ENCODE measurements at regions of chr17 and their contacts with region 1.

Region 1: DNA sequence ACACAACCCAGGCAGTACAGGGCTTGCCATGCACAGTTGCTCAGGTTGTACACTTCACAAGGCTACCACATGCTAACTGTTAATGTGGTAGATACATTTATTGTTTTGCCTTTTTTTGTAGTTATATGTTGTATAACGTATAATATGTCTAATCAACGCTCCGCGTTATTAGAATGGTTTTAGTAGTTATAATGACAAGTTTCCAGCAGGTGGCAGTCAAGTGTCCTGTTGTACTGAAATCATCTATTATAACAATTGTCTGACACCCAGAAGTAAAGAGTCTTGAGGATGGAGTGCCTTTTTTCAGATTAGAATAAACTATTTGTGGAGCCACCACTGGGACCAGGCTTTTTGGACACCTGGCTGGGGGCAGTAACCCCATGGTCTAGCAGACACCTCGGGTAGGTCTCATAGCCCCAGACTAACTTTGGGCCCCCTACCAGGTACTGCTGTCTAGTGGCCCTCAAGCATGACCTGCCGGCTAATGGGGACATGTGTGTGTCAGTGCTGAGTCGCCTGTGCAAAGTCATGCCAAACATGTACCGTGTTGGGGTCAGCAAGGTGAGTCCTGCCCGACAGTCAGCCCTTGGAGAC is 32.8 kb downstream of the MYO15A start:
- DNase-seq: peak; percentile 64 to 65
- ATAC-seq: peak; percentile 43 to 65; a peak in 4 of 6 replicates
- H3K4me3 ChIP-seq: no peak overlapping the region
- H3K27ac ChIP-seq: no peak overlapping the region
- H3K4me1 ChIP-seq: no peaks in the 10 kb centered on the region
- CTCF ChIP-seq: peak; percentile 79
- EP300 ChIP-seq: no peak
- POLR2A ChIP-seq: no peak
- RAD21 ChIP-seq: peak; percentile 48 to 63; a peak in 3 of 5 replicates

Region 2: DNA sequence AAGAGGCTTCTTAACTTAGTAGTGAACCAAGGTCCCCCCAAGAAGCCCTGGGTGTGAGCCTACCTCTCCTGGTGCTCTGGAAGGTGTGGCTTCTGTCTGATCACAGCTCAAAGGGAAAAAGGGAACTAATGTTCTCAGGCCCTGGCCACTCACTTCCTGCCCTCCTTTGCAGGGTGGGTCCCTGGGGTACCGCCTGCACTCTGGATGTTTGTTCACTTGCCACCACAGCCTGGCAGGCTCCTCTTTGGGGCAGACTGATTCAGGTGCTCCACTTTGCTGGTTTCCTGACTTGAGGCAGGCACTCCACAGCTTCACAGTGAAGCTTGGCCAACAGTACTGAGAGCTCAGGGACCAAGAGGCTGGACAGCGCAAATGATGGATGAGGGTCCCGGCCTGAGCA is 38.7 kb before region 1 on chr17:
- CTCF ChIA-PET with region 1: no interaction called
- POLR2A ChIA-PET with region 1: no interaction called
- DNase-seq: no peak
- ATAC-seq: no peak
- H3K4me3 ChIP-seq: no peak overlapping the region
- H3K27ac ChIP-seq: no peak overlapping the region
- H3K4me1 ChIP-seq: no peaks in the 10 kb centered on the region
- CTCF ChIP-seq: no peak
- EP300 ChIP-seq: no peak
- POLR2A ChIP-seq: no peak
- RAD21 ChIP-seq: no peak

Region 3: GRCh38 chr17:18129041-18129502 is 12.2 kb before region 1 on chr17:
- CTCF ChIA-PET with region 1: interaction called, 49 read pairs
- POLR2A ChIA-PET with region 1: no interaction called
- DNase-seq: peak in 1 of 2 experiments; percentile 72
- ATAC-seq: peak; percentile 15 to 72; a peak in 3 of 6 replicates
- H3K4me3 ChIP-seq: no peak overlapping the region
- H3K27ac ChIP-seq: no peak overlapping the region
- H3K4me1 ChIP-seq: no peaks in the 10 kb centered on the region
- CTCF ChIP-seq: no peak
- EP300 ChIP-seq: no peak
- POLR2A ChIP-seq: no peak
- RAD21 ChIP-seq: no peak

Region 4: GRCh38 chr17:18166894-18167293 is 25.6 kb after region 1 on chr17:
- CTCF ChIA-PET with region 1: interaction called, 20 read pairs
- POLR2A ChIA-PET with region 1: no interaction called
- DNase-seq: peak in 1 of 2 experiments; percentile 60
- ATAC-seq: peak; percentile 19 to 67; a peak in 3 of 6 replicates
- H3K4me3 ChIP-seq: no peak overlapping the region
- H3K27ac ChIP-seq: no peak overlapping the region
- H3K4me1 ChIP-seq: no peaks in the 10 kb centered on the region
- CTCF ChIP-seq: no peak; the same call in 2 of the 3 replicates
- EP300 ChIP-seq: no peak
- POLR2A ChIP-seq: no peak
- RAD21 ChIP-seq: peak in 1 of 2 experiments; percentile 36; a peak in 2 of 5 replicates

Region 5: GRCh38 chr17:18191967-18192366 is 50.7 kb after region 1 on chr17:
- CTCF ChIA-PET with region 1: interaction called, 11 read pairs
- POLR2A ChIA-PET with region 1: no interaction called
- DNase-seq: peak in 1 of 2 experiments; percentile 81
- ATAC-seq: peak; percentile 82 to 88; a peak in 5 of 6 replicates
- H3K4me3 ChIP-seq: no peak overlapping the region
- H3K27ac ChIP-seq: no peak overlapping the region
- H3K4me1 ChIP-seq: peaks cover 42% of the 10 kb centered on the region
- CTCF ChIP-seq: peak; percentile 21; the same call in 2 of the 3 replicates
- EP300 ChIP-seq: no peak
- POLR2A ChIP-seq: no peak
- RAD21 ChIP-seq: peak in 1 of 2 experiments; percentile 15; a peak in 1 of 5 replicates

Measured in A549 (cell line).